Activated CD8-positive, alpha-beta memory T cell treated with anti-CD3 and anti-CD28 coated beads, Interleukin-2, amount 10 ng/mL, durations not matched to agents 7 days and 5 days (primary cell): ENCODE measurements at regions of chr11 and their contacts with region 1.

Region 1: DNA sequence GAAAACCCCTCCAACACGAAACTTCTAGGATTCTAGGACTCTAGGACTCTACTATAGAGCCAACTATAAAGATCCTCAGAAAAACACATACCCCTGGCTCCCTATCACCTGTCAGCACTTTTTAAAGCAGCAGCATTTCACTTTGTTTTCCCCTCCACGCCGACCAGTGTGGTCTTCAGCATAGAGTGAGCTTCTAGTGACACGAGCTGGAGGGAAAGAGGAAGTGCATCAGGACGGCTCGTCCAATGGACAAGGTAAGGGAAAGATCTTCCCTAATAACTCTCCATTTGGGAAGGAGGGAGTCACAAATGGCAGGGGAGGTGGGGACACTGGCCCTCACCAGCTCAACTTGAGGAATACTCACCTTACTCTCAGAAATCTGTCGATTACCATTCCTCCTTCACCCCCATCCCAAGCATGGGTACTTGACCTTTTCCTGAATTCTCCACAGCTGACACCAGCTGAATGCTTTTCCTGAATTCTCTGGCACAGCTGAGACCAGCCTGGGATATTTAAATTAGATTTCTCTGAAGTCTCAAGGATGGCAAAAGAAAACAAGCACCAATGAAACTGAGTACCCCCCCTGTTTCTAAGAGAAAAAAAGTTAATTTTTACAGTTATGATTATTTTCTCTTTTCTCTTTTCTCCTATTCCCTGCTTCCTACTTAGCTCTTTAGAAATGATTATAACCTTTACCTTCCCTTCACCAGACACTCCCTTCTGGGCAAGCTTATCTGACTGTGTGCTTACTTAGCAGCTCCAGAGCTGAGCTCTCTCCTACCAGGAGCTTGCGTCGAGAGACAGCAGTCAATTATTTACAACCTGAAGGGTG is 33.3 kb upstream of the NNMT start:
- DNase-seq: peak; percentile 50
- ATAC-seq: peak; percentile 65
- H3K4me3 Mint-ChIP-seq: no peak overlapping the region
- H3K27ac Mint-ChIP-seq: no peak overlapping the region
- H3K4me1 Mint-ChIP-seq: no peaks in the 10 kb centered on the region
- H3K27me3 Mint-ChIP-seq: no peaks in the 10 kb centered on the region

Region 2: GRCh38 chr11:114001416-114001815 is 261.5 kb before region 1 on chr11:
- CTCF ChIA-PET with region 1: interaction called, 15 read pairs
- DNase-seq: no peak
- ATAC-seq: no peak
- H3K4me3 Mint-ChIP-seq: no peak overlapping the region
- H3K27ac Mint-ChIP-seq: no peak overlapping the region
- H3K4me1 Mint-ChIP-seq: no peaks in the 10 kb centered on the region
- H3K27me3 Mint-ChIP-seq: peaks cover 12% of the 10 kb centered on the region

Region 3: GRCh38 chr11:114044042-114044871 is 218.6 kb before region 1 on chr11:
- CTCF ChIA-PET with region 1: interaction called, 99 read pairs
- DNase-seq: no peak
- ATAC-seq: peak; percentile 60
- H3K4me3 Mint-ChIP-seq: no peak overlapping the region
- H3K27ac Mint-ChIP-seq: no peak overlapping the region
- H3K4me1 Mint-ChIP-seq: peaks cover 17% of the 10 kb centered on the region
- H3K27me3 Mint-ChIP-seq: peaks cover 16% of the 10 kb centered on the region

Region 4: GRCh38 chr11:114159802-114160632 is 102.9 kb before region 1 on chr11:
- CTCF ChIA-PET with region 1: interaction called, 21 read pairs
- DNase-seq: peak; percentile 97
- ATAC-seq: peak; percentile 98
- H3K4me3 Mint-ChIP-seq: peak overlapping the region; percentile 46
- H3K27ac Mint-ChIP-seq: peak overlapping the region; percentile 87
- H3K4me1 Mint-ChIP-seq: peaks cover 38% of the 10 kb centered on the region
- H3K27me3 Mint-ChIP-seq: no peaks in the 10 kb centered on the region

Region 5: DNA sequence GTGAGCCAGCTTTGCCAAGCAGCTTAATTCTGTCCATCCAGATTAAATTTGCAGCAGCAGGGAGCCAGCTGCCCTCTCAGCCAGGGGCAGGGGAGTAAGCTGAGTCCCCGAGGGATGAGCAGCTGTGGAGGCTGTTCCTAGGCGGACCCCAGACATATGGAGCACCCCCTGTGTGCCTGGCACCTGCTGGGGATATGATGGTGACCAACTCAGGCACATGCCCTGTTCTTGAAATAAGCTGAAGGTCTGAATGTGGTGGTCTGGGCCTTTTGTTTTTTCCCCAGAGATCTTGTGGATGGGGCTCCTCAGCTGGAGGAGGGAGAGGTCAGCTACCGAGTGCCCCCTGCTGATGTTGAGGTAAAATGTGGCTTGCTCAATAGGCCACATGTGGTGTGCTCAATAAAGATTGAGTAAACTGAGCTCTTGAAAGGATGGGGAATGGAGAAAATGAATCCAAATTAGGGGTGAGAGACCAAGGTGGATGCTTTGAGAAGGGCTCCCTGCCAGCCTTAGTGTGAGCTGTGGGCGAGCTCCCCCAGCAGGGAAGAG is 70.0 kb before region 1 on chr11:
- CTCF ChIA-PET with region 1: interaction called, 14 read pairs
- DNase-seq: no peak
- ATAC-seq: no peak
- H3K4me3 Mint-ChIP-seq: no peak overlapping the region
- H3K27ac Mint-ChIP-seq: no peak overlapping the region
- H3K4me1 Mint-ChIP-seq: peaks cover 14% of the 10 kb centered on the region
- H3K27me3 Mint-ChIP-seq: no peaks in the 10 kb centered on the region

Region 6: DNA sequence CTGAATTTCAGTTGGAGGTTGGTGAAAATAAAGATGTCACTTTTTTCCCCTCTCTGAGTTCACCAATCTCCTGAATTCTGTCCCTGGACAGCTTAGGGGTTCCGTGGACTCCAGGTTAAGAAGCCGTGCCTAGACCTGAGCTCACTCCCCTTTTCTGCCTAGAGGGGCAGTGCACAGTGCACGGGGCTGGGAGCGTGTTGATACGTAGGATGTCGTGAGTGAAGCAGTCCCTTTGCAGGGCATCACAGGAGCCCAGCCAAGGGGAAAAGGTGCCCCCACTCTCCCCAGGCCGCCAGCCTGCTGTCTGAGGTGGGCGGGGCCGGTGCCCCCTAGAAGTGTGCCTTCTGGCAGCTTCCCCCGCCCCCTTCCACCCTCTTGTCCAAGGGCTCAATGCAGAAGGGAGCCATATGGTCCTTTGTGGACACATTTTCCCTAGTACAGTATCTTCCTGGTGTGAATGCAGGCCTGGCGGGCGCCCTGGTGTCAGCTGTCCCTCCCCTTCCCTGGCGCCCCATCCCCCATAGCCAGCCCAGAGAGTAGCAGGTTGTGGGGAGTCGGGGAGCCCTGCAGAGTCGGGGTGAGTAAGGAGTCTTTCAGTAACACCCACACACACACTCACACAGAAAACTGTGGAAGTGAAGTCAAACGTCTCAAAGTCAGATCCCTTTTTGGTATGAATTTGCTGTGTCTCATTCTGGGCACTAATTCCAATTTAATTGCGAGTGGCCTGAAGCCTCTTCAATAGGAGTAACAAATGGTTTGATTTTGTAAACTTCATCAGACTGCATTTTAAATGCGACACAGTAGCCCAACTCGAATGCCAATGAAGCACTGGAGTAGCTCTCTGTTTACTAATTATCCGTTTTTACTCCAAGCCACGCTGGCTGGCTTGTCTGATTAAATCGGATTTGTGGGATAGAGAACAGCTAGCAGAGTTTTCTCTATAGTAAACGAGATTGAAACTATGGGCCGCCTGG is 34.2 kb before region 1 on chr11:
- CTCF ChIA-PET with region 1: interaction called, 13 read pairs
- DNase-seq: no peak
- ATAC-seq: no peak
- H3K4me3 Mint-ChIP-seq: no peak overlapping the region
- H3K27ac Mint-ChIP-seq: no peak overlapping the region
- H3K4me1 Mint-ChIP-seq: peaks cover 21% of the 10 kb centered on the region
- H3K27me3 Mint-ChIP-seq: no peaks in the 10 kb centered on the region